ENCODE measurements at regions of chr3 and their contacts with region 1.

Region 1: GRCh38 chr3:197736491-197737318 is at the start of gene RUBCN:
- DNase-seq: peak; percentile 96
- ATAC-seq: peak; percentile 96
- H3K4me3 Mint-ChIP-seq: peak within 1 kb of the TSS; percentile 100
- H3K27ac Mint-ChIP-seq: peak within 1 kb of the TSS; percentile 97
- H3K4me1 Mint-ChIP-seq: peaks cover 22% of the 10 kb centered on the region
- H3K27me3 Mint-ChIP-seq: no peaks in the 10 kb centered on the region
- total RNA-seq, gene RUBCN: 55.1 to 55.8 TPM

Region 2: DNA sequence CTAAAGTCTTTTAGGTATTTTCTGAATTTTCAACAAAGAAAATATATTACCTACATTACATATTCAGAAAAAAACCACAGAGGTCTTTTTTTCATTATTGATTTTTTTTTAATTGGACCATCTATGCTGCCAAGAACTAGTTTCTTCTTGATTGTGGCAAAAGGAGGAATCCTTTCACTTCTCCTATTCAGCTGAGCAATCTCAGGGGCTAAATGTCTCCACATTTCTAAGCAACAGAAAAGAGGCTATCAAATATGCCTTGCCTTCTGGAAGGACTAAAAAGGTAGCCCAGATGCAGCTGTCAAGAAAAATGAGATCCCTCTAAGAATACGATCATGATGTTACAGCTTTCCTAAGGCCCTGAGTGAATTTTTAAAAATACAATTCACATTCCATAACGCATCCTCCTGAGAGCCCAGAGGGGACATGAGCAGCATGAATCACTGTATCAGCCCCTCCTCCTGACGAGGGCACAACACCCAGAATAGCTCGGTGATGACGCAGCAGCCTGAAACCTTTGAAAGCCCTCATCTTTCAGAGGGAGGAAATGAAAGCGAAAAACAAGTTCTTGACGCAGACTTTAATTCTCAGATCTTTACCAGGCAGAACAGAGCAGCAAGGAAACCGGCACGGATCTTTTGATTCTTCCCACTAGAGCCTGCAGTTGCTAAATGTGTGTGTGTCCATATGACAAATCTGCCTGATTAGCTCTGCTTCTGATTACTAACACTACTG is 24.6 kb before region 1 on chr3:
- POLR2A ChIA-PET with region 1: interaction called, 16 read pairs
- DNase-seq: peak; percentile 65
- ATAC-seq: peak; percentile 100
- H3K4me3 Mint-ChIP-seq: peak overlapping the region; percentile 92
- H3K27ac Mint-ChIP-seq: peak overlapping the region; percentile 100
- H3K4me1 Mint-ChIP-seq: peaks cover 30% of the 10 kb centered on the region
- H3K27me3 Mint-ChIP-seq: no peaks in the 10 kb centered on the region

Region 3: GRCh38 chr3:197847866-197848401 is 111.2 kb after region 1 on chr3:
- POLR2A ChIA-PET with region 1: no interaction called
- DNase-seq: no peak
- ATAC-seq: peak; percentile 98
- H3K4me3 Mint-ChIP-seq: peak overlapping the region; percentile 84
- H3K27ac Mint-ChIP-seq: peak overlapping the region; percentile 96
- H3K4me1 Mint-ChIP-seq: peaks cover 16% of the 10 kb centered on the region
- H3K27me3 Mint-ChIP-seq: no peaks in the 10 kb centered on the region

Measured in activated naive CD8-positive, alpha-beta T cell treated with anti-CD3 and anti-CD28 coated beads, Interleukin-2, amount 10 ng/mL, durations not matched to agents 7 days and 5 days (primary cell).